Right cardiac atrium (tissue), 5 donors: ENCODE measurements at regions of chr17 and their contacts with region 1.

Region 1: DNA sequence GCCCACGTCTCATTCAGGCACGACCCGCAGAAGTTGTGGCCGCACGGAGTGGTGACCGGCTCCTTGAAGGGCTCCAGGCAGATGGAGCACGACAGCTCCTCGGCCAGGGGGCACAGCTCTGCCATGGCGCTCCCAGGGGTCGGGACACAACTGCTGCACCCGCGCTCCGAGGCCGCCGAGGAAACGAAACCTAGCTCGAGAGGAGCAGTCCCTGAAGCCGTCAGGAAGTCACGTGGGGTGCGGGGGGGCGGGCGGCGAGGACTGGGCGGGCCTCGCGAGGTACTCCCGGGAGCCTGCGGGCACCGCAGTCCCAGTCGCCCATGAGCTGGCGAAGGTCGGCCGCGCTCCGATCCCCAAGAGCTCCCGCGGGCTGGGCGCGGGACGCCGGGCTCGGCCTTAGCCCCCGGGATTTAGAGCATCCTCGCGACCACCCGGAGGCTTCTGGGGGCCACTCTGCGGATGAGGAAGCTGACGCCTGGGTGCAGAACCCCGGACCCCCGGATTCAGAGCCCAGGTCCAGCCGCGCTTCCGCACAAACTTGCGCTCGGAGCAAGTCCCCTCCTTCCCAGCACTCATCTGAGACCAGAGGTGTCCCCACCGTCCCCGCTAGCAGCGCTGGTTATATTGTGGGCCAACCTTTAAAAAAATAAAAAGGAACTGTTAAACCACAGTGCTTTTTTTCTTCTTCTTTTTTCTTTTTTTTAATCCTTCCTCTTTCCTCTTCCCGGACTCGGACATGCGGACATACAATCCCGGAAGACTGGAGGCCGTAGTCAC is at the start of gene TRIM25:
- DNase-seq: peak; percentile 90 to 97 (median 96)
- ATAC-seq: peak; percentile 92 to 95
- H3K4me3 ChIP-seq: peak within 1 kb of the TSS; percentile 94
- H3K27ac ChIP-seq: peak within 1 kb of the TSS; percentile 93
- H3K4me1 ChIP-seq: peaks cover 9% of the 10 kb centered on the region
- H3K27me3 ChIP-seq: no peaks in the 10 kb centered on the region
- total RNA-seq, gene TRIM25: 20.5 to 25.7 (median 21.4) TPM

Region 2: DNA sequence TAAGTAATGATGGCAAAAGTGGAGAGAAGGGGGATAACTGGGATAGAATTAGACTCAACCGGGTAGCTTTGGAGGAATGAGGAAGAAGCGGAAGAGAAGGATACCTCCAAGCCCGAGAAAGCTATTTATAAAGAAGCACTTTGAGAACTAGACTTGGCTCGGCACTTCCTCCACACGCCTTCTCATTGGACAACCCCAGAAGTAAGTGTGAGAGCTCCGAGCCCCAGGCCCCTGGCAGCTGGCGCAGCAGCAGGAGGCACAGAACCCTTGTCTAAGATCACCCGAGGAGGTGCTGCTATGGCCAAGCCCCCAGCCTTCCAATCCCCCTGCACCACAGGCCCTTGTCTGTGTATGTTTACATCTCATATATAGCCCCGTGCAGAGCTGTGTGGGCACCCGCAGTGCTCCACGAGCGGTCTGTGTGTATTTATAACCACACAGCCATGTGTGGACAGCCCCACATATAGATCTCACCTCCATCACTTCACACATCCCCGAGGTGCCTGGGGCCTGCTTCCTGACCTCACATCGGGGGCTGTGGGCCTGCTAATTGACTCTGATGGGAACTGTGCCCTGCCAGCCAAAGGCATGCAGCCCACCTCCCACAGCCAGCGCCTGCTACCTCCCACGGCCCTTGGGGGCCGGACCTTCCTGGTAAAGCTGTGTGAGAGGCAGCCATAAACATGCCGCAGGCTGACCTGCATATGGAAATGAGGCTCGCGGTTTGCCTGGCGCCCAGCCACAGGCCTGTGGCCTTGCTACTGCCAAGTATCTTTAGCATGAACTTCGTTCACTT is 176.5 kb before region 1 on chr17:
- intact Hi-C with region 1: no loop called
- DNase-seq: peak in 2 of 3 donors; percentile 55 to 58
- ATAC-seq: peak; percentile 45 to 48
- H3K4me3 ChIP-seq: no peak overlapping the region
- H3K27ac ChIP-seq: no peak overlapping the region
- H3K4me1 ChIP-seq: no peaks in the 10 kb centered on the region
- H3K27me3 ChIP-seq: no peaks in the 10 kb centered on the region

Region 3: GRCh38 chr17:56833809-56834379 is 80.2 kb before region 1 on chr17 and contains the starts of genes C17orf67 and DGKE:
- intact Hi-C with region 1: loop called in 1 of 4 experiments (anchors 5 kb)
- DNase-seq: peak; percentile 99 to 100 (median 99)
- ATAC-seq: peak; percentile 99
- H3K4me3 ChIP-seq: peak within 1 kb of the TSS; percentile 81
- H3K27ac ChIP-seq: peak within 1 kb of the TSS; percentile 71
- H3K4me1 ChIP-seq: no peaks in the 10 kb centered on the region
- H3K27me3 ChIP-seq: no peaks in the 10 kb centered on the region
- total RNA-seq, gene C17orf67: 0.65 to 1.3 (median 1.0) TPM
- total RNA-seq, gene DGKE: 4.7 to 6.0 (median 5.7) TPM